SK-MEL-5 (cell line): ENCODE measurements at regions of chr1 and their contacts with region 1.

Region 1: GRCh38 chr1:223081181-223081994 is 61.7 kb downstream of the TLR5 start:
- DNase-seq: peak; percentile 92

Region 2: GRCh38 chr1:222792744-222793143 is 288.6 kb before region 1 on chr1:
- in situ Hi-C with region 1: loop called (anchors 25 kb)
- DNase-seq: peak; percentile 49

Region 3: DNA sequence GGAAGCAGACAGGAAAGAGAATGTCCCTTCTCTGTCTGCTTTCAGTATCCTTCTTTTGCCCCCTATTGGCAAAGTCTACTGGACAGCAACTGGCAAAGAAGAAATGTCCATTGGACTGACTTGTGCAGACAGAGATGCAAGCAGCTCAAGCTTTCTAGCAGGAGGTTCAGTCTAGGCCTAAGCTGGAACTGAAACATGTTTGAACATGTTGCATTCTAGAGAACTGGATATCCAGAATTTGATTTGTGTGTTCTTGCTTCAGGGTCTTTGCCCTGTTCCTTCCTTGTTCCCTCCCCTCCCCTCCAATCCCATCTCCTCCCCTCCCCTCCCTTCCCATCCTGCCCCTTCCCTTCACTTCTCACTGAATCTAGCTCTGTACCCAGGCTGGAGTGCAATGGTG is 275.5 kb before region 1 on chr1:
- in situ Hi-C with region 1: no loop called
- DNase-seq: no peak